ENCODE measurements at regions of chr3 and their contacts with region 1.

Region 1: GRCh38 chr3:142828703-142829305 is 60.1 kb downstream of the PCOLCE2 start:
- DNase-seq: peak; percentile 51
- H3K4me3 ChIP-seq: no peak overlapping the region
- H3K27ac ChIP-seq: no peak overlapping the region
- H3K27me3 ChIP-seq: no peaks in the 10 kb centered on the region
- CTCF ChIP-seq: peak; percentile 93

Region 2: DNA sequence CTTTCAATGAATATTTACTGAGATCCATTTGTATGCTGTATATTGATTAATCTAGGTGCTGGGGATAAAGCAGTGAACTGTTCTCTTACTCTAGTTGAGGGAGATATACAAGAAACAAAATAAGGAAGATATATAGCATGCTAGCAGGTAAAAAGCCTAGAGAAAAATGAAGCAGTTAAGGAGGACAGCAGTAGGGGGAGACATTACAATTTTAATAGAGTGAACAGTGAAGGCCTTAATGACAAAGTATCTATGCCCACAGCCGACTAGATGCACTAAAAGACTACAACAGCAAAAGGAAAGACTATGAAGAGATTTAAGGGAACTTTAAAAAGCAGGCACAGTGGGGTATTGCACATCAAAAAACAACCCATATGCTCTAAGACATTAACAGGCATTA is 462.4 kb before region 1 on chr3:
- CTCF ChIA-PET with region 1: no interaction called
- POLR2A ChIA-PET with region 1: no interaction called
- DNase-seq: no peak
- H3K4me3 ChIP-seq: no peak overlapping the region
- H3K27ac ChIP-seq: no peak overlapping the region
- H3K27me3 ChIP-seq: no peaks in the 10 kb centered on the region
- CTCF ChIP-seq: 0 out of 2 replicates have a peak, but pooled peaks have one; percentile 20

Region 3: GRCh38 chr3:142796823-142797222 is 32.0 kb before region 1 on chr3:
- CTCF ChIA-PET with region 1: interaction called, 14 read pairs
- POLR2A ChIA-PET with region 1: no interaction called
- DNase-seq: no peak
- H3K4me3 ChIP-seq: no peak overlapping the region
- H3K27ac ChIP-seq: no peak overlapping the region
- H3K27me3 ChIP-seq: no peaks in the 10 kb centered on the region
- CTCF ChIP-seq: no peak

Region 4: GRCh38 chr3:142844339-142844977 is 15.7 kb after region 1 on chr3:
- CTCF ChIA-PET with region 1: interaction called, 19 read pairs
- POLR2A ChIA-PET with region 1: no interaction called
- DNase-seq: no peak
- H3K4me3 ChIP-seq: no peak overlapping the region
- H3K27ac ChIP-seq: no peak overlapping the region
- H3K27me3 ChIP-seq: no peaks in the 10 kb centered on the region
- CTCF ChIP-seq: peak; percentile 59

Region 5: GRCh38 chr3:142902356-142902755 is 73.6 kb after region 1 on chr3:
- CTCF ChIA-PET with region 1: interaction called, 11 read pairs
- POLR2A ChIA-PET with region 1: no interaction called
- DNase-seq: no peak
- H3K4me3 ChIP-seq: no peak overlapping the region
- H3K27ac ChIP-seq: no peak overlapping the region
- H3K27me3 ChIP-seq: peaks cover 4% of the 10 kb centered on the region
- CTCF ChIP-seq: no peak

Region 6: DNA sequence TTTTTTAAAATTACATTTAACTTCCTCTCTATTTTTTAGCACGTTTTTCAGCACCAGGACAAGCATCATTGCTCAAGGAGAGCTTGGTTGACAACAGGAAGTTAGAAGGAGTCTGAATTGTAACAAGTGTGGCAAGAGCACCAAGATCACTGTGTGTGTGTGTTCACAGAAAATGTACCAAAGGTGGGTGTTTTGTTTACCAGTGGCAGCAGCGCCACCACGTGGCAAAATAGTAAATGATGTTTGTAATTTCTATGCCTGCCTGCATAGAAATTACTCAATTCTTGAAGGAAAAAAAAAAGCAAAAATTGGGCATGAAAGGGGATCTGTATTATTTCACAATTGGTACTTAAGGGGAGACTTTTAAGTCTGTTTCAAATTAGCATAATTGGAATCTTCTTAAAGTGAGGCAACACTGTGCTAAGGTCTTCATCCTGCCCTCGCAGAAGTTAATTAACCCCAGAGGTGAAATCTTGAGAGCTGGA is 165.2 kb after region 1 on chr3:
- CTCF ChIA-PET with region 1: interaction called, 167 read pairs
- POLR2A ChIA-PET with region 1: no interaction called
- DNase-seq: peak; percentile 41
- H3K4me3 ChIP-seq: no peak overlapping the region
- H3K27ac ChIP-seq: no peak overlapping the region
- H3K27me3 ChIP-seq: no peaks in the 10 kb centered on the region
- CTCF ChIP-seq: peak; percentile 67

Region 7: GRCh38 chr3:143040261-143040879 is 211.6 kb after region 1 on chr3:
- CTCF ChIA-PET with region 1: interaction called, 13 read pairs
- POLR2A ChIA-PET with region 1: no interaction called
- DNase-seq: no peak
- H3K4me3 ChIP-seq: no peak overlapping the region
- H3K27ac ChIP-seq: no peak overlapping the region
- H3K27me3 ChIP-seq: no peaks in the 10 kb centered on the region
- CTCF ChIP-seq: peak; percentile 61